ENCODE measurements at regions of chr18 and their contacts with region 1.

Region 1: DNA sequence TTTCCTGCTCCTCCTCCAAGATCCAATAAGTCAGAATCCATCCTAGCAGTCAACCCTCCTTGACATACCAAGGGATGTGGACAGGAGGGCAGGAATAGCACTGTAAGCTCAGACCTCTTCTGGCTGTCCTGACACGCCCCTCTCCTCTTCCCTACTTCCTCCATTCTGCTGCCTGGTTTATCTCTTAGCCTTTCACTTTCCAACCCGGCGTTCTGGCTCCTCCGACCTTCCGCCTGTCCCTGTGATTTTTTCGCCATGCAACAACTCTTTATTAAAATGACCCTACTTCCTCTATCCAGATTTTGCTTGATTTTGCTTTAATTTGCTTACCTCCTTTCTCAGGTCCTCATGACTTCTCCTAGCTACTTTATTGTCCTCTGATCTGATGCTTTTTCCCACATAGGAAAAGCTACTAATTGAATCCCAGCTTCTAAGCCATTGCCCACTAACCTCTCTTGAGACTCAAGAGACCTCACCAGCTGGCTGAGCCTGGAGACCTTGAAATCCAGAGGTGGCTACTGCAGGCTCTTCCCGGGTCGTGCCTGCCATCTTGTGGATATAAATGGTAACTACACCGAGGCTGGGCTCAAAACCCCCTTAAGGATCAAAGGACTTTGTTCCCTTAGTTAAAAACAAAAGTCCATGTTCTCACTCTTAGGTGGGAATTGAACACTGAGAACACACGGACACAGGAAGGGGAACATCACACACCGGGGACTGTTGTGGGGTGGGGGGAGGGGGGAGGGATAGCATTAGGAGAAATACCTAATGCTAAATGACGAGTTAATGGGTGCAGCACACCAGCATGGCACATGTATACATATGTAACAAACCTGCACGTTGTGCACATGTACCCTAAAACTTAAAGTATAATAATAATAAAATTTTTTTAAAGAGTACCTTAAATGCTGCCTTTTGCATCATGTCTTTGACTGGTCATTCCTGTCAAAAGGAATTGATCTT is 139.4 kb downstream of the AKAIN1 start:
- DNase-seq: peak; percentile 53
- CTCF ChIP-seq: peak; percentile 81

Region 2: GRCh38 chr18:5073026-5073944 is 15.6 kb after region 1 on chr18:
- CTCF ChIA-PET with region 1: interaction called, 28 read pairs
- POLR2A ChIA-PET with region 1: no interaction called
- DNase-seq: peak; percentile 15
- CTCF ChIP-seq: peak; percentile 57

Region 3: DNA sequence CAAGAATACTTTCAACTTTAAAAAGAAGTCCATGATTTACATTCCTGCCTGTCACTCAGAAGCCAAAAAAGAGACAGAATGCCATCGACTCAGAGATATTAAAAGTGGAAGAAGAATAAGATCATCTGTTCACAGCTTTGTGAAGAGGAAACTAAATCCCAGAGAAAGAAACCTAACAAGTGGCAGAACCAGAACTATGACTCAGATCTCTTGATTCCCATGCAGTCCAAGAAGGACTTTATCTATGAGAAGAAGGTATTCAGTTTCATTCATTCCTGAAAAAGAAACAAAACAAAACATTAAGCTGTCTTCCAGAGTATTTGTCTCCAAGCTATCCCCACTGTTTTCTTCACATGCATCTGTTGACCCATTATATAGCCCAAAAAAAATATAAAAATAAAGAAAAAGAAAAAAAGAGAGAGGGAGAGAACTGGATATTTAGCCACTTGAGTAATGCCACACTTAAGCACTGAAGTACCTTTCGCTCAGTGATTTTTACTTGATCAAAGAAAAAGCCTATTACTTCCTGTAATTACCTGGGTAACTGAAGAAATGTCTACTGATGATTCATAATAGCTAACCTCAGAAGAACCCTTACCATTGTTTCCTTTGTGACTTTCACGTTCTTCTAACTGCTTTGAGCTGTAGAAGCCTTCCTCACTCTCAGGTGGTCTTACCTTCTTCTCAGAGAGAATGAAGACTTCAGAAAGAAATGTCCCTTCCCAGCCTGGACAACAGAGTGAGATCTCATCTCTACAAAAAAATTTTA is 157.1 kb after region 1 on chr18:
- CTCF ChIA-PET with region 1: no interaction called
- POLR2A ChIA-PET with region 1: no interaction called
- DNase-seq: no peak
- CTCF ChIP-seq: no peak

Measured in GM10248 (cell line).